ENCODE measurements at regions of chr2 and their contacts with region 1.

Region 1: DNA sequence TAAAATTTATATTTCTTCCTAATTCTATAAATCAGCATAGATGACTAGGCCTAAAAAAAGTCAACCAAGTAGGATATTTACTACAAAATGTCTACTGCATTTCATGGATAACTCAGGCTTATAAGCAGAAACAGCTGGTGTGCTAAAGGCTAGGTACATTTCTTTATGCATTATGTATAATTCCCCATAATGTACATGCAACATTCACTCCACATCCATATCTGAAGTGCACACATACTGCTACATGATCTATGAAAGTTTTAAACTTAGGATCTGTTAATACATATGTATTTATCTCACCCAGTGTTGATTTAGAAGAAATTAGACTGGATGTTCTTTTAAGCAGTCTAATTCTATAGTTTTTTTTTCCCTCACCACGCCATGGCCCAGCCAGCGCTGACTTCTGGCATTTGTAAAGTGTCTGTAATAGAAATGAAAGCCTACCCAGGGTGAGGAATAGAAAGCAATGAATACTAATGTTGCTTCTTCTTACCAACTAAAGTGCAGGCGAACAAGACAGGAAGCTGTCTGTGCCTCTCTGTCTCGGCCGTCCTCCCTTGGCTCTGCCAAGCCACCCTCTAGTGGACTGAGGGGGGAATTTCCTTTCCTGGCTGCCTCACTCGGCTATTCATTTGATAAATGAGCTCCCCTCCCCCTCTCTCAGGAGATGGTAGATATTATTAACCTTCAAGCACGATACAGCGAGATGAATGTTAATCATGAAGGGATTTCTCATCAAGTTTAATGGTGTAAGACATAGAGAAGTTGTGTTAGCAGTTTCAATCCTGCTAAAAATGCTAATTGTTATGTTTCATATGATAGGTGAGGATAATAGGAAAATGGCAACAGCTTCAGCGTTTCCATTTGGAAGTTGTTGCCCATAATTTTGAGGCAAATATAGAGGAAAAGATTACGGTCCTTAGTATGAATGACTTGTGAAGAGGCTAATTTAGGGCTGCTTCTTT is 384.5 kb downstream of the MTX2 start:
- DNase-seq: no peak
- H3K4me3 ChIP-seq: no peak overlapping the region
- H3K27me3 ChIP-seq: no peaks in the 10 kb centered on the region; the same call in 1 of the 2 replicates
- CTCF ChIP-seq: peak; percentile 79

Region 2: GRCh38 chr2:176638167-176639015 is 15.4 kb before region 1 on chr2:
- CTCF ChIA-PET with region 1: interaction called, 59 read pairs
- POLR2A ChIA-PET with region 1: no interaction called
- DNase-seq: no peak
- H3K4me3 ChIP-seq: peak overlapping the region; percentile 59
- H3K27me3 ChIP-seq: peaks cover 1% of the 10 kb centered on the region
- CTCF ChIP-seq: peak; percentile 70

Region 3: DNA sequence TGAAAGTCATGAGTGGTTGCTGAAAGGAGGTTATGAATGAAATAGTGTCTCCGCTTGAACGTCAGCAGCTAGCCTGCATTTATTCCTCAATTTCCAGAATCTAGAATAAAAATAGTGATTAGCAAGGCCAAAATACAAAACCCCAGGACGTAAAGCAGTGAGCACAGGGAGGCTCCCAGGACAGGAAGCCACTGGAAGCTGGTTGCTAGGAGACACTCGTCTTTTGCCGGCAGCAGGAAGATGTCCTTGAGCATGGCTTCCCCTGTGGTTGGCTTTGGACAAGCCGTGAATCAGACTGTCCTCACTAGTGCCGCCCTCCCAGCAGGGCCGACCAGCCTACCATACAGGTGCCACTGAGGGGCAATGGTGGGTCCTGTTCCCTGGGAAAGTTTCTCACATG is 10.1 kb before region 1 on chr2:
- CTCF ChIA-PET with region 1: interaction called, 59 read pairs
- POLR2A ChIA-PET with region 1: no interaction called
- DNase-seq: no peak
- H3K4me3 ChIP-seq: no peak overlapping the region
- H3K27me3 ChIP-seq: peaks cover 1% of the 10 kb centered on the region
- CTCF ChIP-seq: no peak

Region 4: GRCh38 chr2:176669398-176670174 is 15.8 kb after region 1 on chr2:
- CTCF ChIA-PET with region 1: interaction called, 34 read pairs
- POLR2A ChIA-PET with region 1: no interaction called
- DNase-seq: no peak
- H3K4me3 ChIP-seq: no peak overlapping the region
- H3K27me3 ChIP-seq: no peaks in the 10 kb centered on the region; the same call in 1 of the 2 replicates
- CTCF ChIP-seq: no peak